ENCODE measurements at regions of chr3 and their contacts with region 1.

Region 1: GRCh38 chr3:27607370-27607769 is 114.8 kb downstream of the EOMES start:
- DNase-seq: peak; percentile 60
- ATAC-seq: peak; percentile 97
- H3K4me3 ChIP-seq: no peak overlapping the region
- H3K27ac ChIP-seq: peak overlapping the region; percentile 29
- H3K4me1 ChIP-seq: peaks cover 15% of the 10 kb centered on the region
- H3K27me3 ChIP-seq: no peaks in the 10 kb centered on the region
- CTCF ChIP-seq: no peak

Region 2: GRCh38 chr3:27596334-27596841 is 11.0 kb before region 1 on chr3:
- CTCF ChIA-PET with region 1: no interaction called
- POLR2A ChIA-PET with region 1: no interaction called
- intact Hi-C with region 1: loop called (anchors 1 kb)
- DNase-seq: peak; percentile 69
- ATAC-seq: peak; percentile 84
- H3K4me3 ChIP-seq: no peak overlapping the region
- H3K27ac ChIP-seq: peak overlapping the region; percentile 61
- H3K4me1 ChIP-seq: peaks cover 25% of the 10 kb centered on the region
- H3K27me3 ChIP-seq: no peaks in the 10 kb centered on the region
- CTCF ChIP-seq: no peak

Region 3: GRCh38 chr3:28042095-28042635 is 434.8 kb after region 1 on chr3:
- CTCF ChIA-PET with region 1: no interaction called
- POLR2A ChIA-PET with region 1: no interaction called
- intact Hi-C with region 1: no loop called
- DNase-seq: no peak
- ATAC-seq: no peak
- H3K4me3 ChIP-seq: no peak overlapping the region
- H3K27ac ChIP-seq: no peak overlapping the region
- H3K4me1 ChIP-seq: no peaks in the 10 kb centered on the region
- H3K27me3 ChIP-seq: no peaks in the 10 kb centered on the region
- CTCF ChIP-seq: no peak